Activated CD4-positive, alpha-beta memory T cell treated with anti-CD3 and anti-CD28 coated beads, Interleukin-2, amount 10 ng/mL, durations not matched to agents 7 days and 5 days (primary cell): ENCODE measurements at regions of chr2 and their contacts with region 1.

Region 1: DNA sequence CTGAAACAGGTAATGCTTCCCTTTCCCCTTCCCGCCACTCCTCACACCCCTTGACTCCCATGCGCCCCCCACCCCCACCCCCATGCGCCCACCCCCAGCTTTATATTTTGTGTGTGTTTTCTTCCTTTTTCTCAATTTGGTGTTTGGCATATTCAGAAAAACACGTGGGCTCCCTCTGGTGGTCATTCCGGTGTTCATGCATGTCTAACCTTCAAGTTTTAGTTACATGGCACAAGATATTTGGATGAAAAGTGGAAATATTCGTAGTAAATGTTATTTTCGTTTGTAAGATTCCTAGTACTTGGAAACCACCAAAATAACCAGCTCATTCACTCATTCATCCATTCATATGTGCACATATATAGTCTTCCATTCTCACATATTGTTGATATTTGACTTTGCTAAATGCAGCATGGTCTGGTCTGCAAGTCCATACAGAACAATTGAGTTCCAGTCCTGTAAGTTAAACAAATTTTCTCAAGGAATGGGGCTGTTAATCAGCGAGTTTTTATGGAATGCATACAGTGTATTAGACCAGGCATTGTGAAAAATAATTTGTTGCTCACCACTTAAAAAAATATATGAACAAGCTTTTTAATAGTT is 143.6 kb upstream of the MAP3K20 start:
- DNase-seq: peak; percentile 59
- H3K4me3 Mint-ChIP-seq: no peak overlapping the region
- H3K27ac Mint-ChIP-seq: no peak overlapping the region
- H3K4me1 Mint-ChIP-seq: peaks cover 3% of the 10 kb centered on the region
- H3K27me3 Mint-ChIP-seq: peaks cover 35% of the 10 kb centered on the region

Region 2: DNA sequence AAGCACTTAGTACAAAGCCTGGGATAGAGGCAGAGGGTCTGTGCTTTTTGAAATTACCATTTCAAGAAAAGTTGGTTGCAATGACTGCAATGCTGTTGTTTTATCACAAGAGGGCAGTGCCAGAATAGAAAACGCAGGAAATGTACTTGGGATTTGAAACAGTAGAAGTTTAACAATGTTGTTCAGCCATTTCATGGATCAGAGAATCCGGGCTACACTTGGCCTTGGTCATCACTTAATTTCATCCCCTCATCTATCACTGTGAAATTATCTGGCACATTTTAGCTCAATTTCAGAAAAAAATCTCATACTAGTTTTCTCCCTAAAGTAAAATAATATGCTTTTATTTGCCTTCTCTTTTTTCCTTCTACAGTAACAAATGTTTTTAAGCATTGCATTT is 125.5 kb before region 1 on chr2:
- CTCF ChIA-PET with region 1: interaction called, 32 read pairs
- POLR2A ChIA-PET with region 1: no interaction called
- DNase-seq: no peak
- H3K4me3 Mint-ChIP-seq: no peak overlapping the region
- H3K27ac Mint-ChIP-seq: no peak overlapping the region
- H3K4me1 Mint-ChIP-seq: no peaks in the 10 kb centered on the region
- H3K27me3 Mint-ChIP-seq: peaks cover 21% of the 10 kb centered on the region

Region 3: GRCh38 chr2:173099804-173100203 is 167.8 kb after region 1 on chr2:
- CTCF ChIA-PET with region 1: no interaction called
- POLR2A ChIA-PET with region 1: no interaction called
- DNase-seq: no peak
- H3K4me3 Mint-ChIP-seq: no peak overlapping the region
- H3K27ac Mint-ChIP-seq: no peak overlapping the region
- H3K4me1 Mint-ChIP-seq: peaks cover 13% of the 10 kb centered on the region
- H3K27me3 Mint-ChIP-seq: peaks cover under 1% of the 10 kb centered on the region